ENCODE measurements at regions of chr11 and their contacts with region 1.

Region 1: GRCh38 chr11:62169091-62169847 is 20.7 kb upstream of the SCGB1D1 start:
- DNase-seq: peak; percentile 11
- H3K4me3 ChIP-seq: no peak overlapping the region
- H3K27ac ChIP-seq: no peak overlapping the region
- H3K4me1 ChIP-seq: peaks cover 6% of the 10 kb centered on the region
- H3K27me3 ChIP-seq: peaks cover 31 to 44% of the 10 kb centered on the region in 2 experiments
- CTCF ChIP-seq: no peak
- POLR2A ChIP-seq: no peak

Region 2: DNA sequence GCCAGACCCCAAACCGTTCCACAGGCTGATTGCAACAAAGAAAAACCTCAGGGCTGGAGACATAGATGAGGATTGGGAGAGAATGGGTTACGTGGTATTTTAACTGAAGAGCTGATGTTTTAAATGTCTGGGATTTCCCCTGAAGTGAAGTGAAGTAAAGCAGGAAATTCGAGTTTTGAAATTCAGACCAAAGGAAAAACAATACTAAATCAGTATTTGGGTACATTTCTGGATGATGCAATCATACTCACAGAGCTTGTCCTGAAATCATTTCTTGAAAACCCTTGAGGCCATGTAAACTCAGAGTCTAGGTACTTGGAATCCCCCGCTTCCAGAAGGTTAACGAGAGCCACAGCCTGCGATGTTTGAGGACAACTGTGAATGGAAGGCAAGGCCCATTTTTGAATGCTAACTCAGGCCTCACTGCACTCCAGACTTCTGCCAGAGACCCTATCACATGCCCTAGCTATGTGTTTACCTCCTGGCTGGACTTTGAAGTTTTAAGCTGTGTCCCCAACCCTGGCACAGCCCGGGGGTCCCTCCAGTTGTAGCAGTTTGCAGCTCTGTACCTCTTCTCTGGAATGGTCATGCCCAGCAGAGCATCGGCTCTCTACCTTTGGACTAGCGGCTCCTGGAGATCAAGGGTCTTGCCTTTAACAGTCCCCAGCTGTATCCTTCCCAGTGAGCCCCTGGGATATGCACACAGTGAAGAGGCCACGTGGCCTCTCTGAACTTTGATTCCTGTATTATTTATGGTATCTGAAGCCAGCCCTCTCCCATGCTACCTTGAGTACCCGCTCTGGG is 196.4 kb before region 1 on chr11:
- CTCF ChIA-PET with region 1: no interaction called
- POLR2A ChIA-PET with region 1: no interaction called
- dilution Hi-C with region 1: no loop called
- intact Hi-C with region 1: no loop called
- DNase-seq: peak; percentile 76
- H3K4me3 ChIP-seq: peak overlapping the region in 1 of 3 experiments; percentile 14
- H3K27ac ChIP-seq: peak overlapping the region; percentile 98
- H3K4me1 ChIP-seq: peaks cover 70% of the 10 kb centered on the region
- H3K27me3 ChIP-seq: no peaks in the 10 kb centered on the region
- CTCF ChIP-seq: no peak
- POLR2A ChIP-seq: no peak

Region 3: GRCh38 chr11:62143727-62144126 is 25.5 kb before region 1 on chr11:
- CTCF ChIA-PET with region 1: interaction called, 11 read pairs
- POLR2A ChIA-PET with region 1: no interaction called
- dilution Hi-C with region 1: no loop called
- intact Hi-C with region 1: no loop called
- DNase-seq: peak; percentile 30
- H3K4me3 ChIP-seq: no peak overlapping the region
- H3K27ac ChIP-seq: no peak overlapping the region
- H3K4me1 ChIP-seq: no peaks in the 10 kb centered on the region
- H3K27me3 ChIP-seq: no peaks in the 10 kb centered on the region
- CTCF ChIP-seq: peak; percentile 5 to 43
- POLR2A ChIP-seq: no peak

Region 4: DNA sequence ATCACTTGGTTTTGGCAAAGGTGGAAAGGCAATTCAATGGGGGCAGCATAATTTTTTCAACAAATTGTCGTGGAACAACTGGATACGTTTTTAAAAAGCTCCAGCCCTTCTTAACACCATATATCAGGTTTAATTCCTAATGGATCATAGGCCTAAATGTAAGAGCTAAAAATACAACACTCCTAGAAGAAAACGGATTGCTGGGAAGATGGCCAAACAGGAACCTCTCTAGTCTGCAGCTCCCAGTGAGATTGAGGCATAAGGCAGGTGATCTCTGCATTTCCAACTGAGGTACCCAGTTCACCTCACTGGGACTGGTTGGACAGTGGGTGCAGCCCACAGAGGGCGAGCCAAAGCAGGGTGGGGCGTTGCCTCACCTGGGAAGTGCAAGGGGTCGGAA is 11.7 kb before region 1 on chr11:
- CTCF ChIA-PET with region 1: interaction called, 22 read pairs
- POLR2A ChIA-PET with region 1: no interaction called
- dilution Hi-C with region 1: no loop called
- intact Hi-C with region 1: no loop called
- DNase-seq: peak; percentile 31
- H3K4me3 ChIP-seq: no peak overlapping the region
- H3K27ac ChIP-seq: no peak overlapping the region
- H3K4me1 ChIP-seq: peaks cover 11% of the 10 kb centered on the region
- H3K27me3 ChIP-seq: peaks cover 0 to 3% of the 10 kb centered on the region in 2 experiments
- CTCF ChIP-seq: no peak
- POLR2A ChIP-seq: no peak

Region 5: DNA sequence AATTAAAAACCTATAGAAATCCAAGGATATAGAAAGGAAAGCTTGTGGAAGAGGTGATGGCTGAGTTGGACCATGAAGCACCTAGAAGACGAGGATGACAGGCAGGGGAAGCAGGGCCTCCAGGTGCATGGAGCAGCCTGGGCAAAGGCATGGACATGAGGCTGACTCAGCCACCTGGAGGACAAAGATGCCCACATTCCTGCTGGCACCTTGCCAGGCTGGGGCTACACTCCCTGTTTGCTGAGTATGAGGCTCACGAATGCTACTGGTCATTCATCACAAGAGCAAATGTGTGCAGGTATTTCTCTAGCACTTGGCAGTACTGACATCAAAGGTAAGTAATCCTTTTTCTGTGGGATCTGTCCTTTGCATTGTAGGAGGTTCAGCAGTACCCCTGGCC is 32.1 kb after region 1 on chr11:
- CTCF ChIA-PET with region 1: interaction called, 18 read pairs
- POLR2A ChIA-PET with region 1: no interaction called
- dilution Hi-C with region 1: loop called (anchors 5 kb)
- intact Hi-C with region 1: no loop called
- DNase-seq: no peak
- H3K4me3 ChIP-seq: no peak overlapping the region
- H3K27ac ChIP-seq: no peak overlapping the region
- H3K4me1 ChIP-seq: no peaks in the 10 kb centered on the region
- H3K27me3 ChIP-seq: peaks cover 10 to 20% of the 10 kb centered on the region in 2 experiments
- CTCF ChIP-seq: no peak
- POLR2A ChIP-seq: no peak

Region 6: GRCh38 chr11:62315431-62315830 is 146.2 kb after region 1 on chr11:
- CTCF ChIA-PET with region 1: interaction called, 21 read pairs
- POLR2A ChIA-PET with region 1: no interaction called
- dilution Hi-C with region 1: no loop called
- intact Hi-C with region 1: loop called (anchors 1 kb)
- DNase-seq: no peak
- H3K4me3 ChIP-seq: no peak overlapping the region
- H3K27ac ChIP-seq: no peak overlapping the region
- H3K4me1 ChIP-seq: no peaks in the 10 kb centered on the region
- H3K27me3 ChIP-seq: peaks cover 8 to 12% of the 10 kb centered on the region in 2 experiments
- CTCF ChIP-seq: no peak
- POLR2A ChIP-seq: no peak